Activated B cell treated with CpG ODN at 0.5 μM for 24 hours (primary cell): ENCODE measurements at regions of chr16 and their contacts with region 1.

Region 1: GRCh38 chr16:89945670-89946069 is 2.9 kb upstream of the DEF8 start:
- DNase-seq: no peak
- ATAC-seq: no peak
- H3K4me3 Mint-ChIP-seq: no peak overlapping the region
- H3K27ac Mint-ChIP-seq: no peak overlapping the region
- H3K4me1 Mint-ChIP-seq: peaks cover 46% of the 10 kb centered on the region
- H3K27me3 Mint-ChIP-seq: peaks cover 8% of the 10 kb centered on the region
- CTCF ChIP-seq: no peak

Region 2: GRCh38 chr16:89917773-89918452 is 27.8 kb before region 1 on chr16:
- CTCF ChIA-PET with region 1: interaction called, 3 read pairs
- POLR2A ChIA-PET with region 1: interaction called, 8 read pairs
- intact Hi-C with region 1: loop called (anchors 1 kb)
- DNase-seq: peak; percentile 61
- ATAC-seq: peak; percentile 80
- H3K4me3 Mint-ChIP-seq: peak overlapping the region; percentile 66
- H3K27ac Mint-ChIP-seq: no peak overlapping the region
- H3K4me1 Mint-ChIP-seq: peaks cover 28% of the 10 kb centered on the region
- H3K27me3 Mint-ChIP-seq: peaks cover 17% of the 10 kb centered on the region
- CTCF ChIP-seq: no peak

Region 3: DNA sequence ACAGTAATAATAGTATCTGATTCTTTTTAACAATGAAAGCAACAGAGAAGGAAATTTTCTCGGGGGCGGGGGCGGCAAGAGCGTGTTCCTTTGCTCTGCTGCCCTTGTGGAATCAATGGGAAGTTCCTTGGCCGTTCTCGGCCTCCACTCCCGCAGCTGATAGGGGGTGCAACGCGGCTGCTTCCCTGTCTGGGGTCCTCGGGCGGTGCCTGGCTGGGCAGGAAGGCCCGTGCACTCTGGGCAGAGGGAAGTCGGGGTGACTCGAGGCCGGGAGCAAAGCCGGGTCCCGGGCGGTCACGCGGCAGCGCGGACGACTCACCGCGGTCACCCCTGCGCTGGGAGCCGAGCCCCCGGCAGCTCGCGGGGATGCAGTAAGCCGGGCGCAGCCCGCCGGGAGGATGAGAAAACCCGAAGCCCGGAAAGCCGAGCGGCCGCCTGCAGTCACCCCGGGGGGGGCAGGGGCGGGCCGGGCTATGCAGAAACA is 20.0 kb before region 1 on chr16:
- CTCF ChIA-PET with region 1: no interaction called
- POLR2A ChIA-PET with region 1: interaction called, 3 read pairs
- intact Hi-C with region 1: loop called (anchors 1 kb)
- DNase-seq: no peak
- ATAC-seq: no peak
- H3K4me3 Mint-ChIP-seq: no peak overlapping the region
- H3K27ac Mint-ChIP-seq: no peak overlapping the region
- H3K4me1 Mint-ChIP-seq: peaks cover 25% of the 10 kb centered on the region
- H3K27me3 Mint-ChIP-seq: peaks cover 17% of the 10 kb centered on the region
- CTCF ChIP-seq: no peak

Region 4: DNA sequence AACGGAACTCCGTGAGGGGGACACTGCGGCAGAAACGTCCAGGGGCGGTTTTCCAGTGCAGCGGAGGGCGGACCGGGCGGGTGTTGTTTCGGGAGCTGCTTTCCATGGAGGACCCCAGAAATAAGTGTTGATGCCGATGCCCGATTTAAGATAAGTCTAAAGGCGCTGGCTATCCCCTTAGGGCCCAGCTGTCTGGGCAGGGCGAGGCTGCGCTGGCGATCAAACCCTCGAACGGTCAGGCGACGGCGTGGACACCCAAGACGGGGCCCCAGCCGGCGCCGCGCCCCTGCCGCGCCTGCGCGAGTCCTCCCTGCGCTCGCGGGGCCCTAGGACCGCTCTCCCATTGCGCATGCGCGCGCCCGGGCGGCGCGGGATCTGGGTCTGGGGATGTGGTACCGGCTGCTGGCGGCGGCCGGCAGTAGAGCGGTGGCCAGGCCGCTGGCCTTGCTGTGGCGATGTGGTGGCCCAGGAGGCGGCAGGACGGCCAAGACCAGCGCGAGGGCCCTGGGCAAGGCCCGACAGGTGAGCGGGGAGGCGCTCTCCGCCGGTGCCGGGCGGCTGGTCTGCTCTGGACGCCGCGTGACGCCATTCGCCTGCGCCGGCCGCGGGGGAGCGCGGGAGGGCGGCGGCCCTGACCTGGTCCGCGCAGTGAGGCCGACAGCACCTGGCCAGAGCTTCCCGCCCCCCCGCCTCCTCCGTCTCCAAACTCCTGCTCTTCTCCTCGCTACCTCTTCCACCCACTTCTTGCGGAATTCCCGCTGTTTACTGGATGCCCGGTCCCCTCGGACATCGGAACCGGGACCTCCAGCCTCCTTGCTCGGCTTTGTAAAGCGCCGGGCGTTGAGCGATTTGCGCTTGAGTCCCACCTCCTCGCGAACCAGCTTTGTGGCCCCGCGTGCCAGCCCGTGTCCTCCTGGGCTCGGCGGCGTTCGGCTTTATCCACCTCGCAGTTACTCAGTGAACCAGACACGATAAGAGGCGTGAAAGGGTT is 26.9 kb after region 1 on chr16:
- CTCF ChIA-PET with region 1: interaction called, 3 read pairs
- POLR2A ChIA-PET with region 1: interaction called, 5 read pairs
- intact Hi-C with region 1: loop called (anchors 1 kb)
- DNase-seq: peak; percentile 94
- ATAC-seq: peak; percentile 92
- H3K4me3 Mint-ChIP-seq: peak overlapping the region; percentile 99
- H3K27ac Mint-ChIP-seq: peak overlapping the region; percentile 94
- H3K4me1 Mint-ChIP-seq: peaks cover 41% of the 10 kb centered on the region
- H3K27me3 Mint-ChIP-seq: no peaks in the 10 kb centered on the region
- CTCF ChIP-seq: no peak

Region 5: DNA sequence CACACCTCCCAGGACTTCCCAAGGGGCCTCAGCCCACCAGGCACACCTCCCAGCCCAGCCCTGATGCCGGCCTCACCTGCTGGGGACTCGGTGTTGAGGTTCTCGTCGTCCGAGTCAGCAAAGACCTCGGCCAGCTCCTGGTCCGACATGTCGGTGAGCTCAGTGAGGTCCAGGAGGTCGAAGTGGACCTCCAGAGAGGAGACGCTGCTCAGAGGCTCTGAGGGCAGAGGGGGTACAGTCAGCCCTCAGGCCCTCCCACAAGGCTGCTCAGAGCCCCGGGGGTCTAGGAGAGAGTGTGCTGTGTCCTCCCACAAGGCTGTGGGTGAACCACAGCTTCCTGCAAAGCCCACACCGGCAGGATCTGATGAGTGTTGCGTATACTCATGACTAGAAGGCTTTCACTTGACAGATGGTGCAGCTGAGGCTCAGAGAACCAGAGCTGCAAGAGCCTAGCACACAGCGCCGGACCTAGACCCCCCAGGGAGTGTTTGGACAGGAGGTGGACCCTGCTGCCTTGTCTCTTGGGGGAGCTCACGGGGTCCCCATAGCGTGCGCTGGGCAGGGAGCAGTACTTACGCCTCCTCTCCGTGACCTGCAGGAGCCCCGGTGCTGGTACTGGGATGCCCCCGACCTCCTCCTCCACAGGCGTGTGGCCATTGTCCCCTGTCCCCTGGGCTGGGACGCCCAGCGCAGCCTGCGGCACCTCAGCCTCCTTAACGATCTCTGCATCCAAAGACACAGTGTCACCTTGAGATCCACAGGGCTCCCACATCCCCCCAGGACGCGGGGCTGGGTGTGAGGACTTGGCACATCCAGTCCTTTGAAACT is 63.3 kb after region 1 on chr16:
- CTCF ChIA-PET with region 1: no interaction called
- POLR2A ChIA-PET with region 1: interaction called, 4 read pairs
- intact Hi-C with region 1: loop called (anchors 5 kb)
- DNase-seq: peak; percentile 63
- ATAC-seq: peak; percentile 90
- H3K4me3 Mint-ChIP-seq: peak overlapping the region; percentile 60
- H3K27ac Mint-ChIP-seq: peak overlapping the region; percentile 76
- H3K4me1 Mint-ChIP-seq: peaks cover 63% of the 10 kb centered on the region
- H3K27me3 Mint-ChIP-seq: no peaks in the 10 kb centered on the region
- CTCF ChIP-seq: no peak